ENCODE measurements at regions of chr3 and their contacts with region 1.

Region 1: GRCh38 chr3:25664810-25665314 is at the start of gene TOP2B:
- DNase-seq: peak; percentile 94 to 97 (median 95)
- H3K4me3 ChIP-seq: peak within 1 kb of the TSS; percentile 51 to 79
- H3K4me3 Mint-ChIP-seq: peak within 1 kb of the TSS; percentile 98 to 100 (median 99)
- H3K27ac ChIP-seq: peak within 1 kb of the TSS; percentile 86
- H3K27ac Mint-ChIP-seq: peak within 1 kb of the TSS; percentile 99 to 100 (median 100)
- H3K4me1 ChIP-seq: peaks cover 45% of the 10 kb centered on the region
- H3K4me1 Mint-ChIP-seq: peaks cover 27 to 58% (median 43%) of the 10 kb centered on the region in 4 donors
- H3K27me3 ChIP-seq: no peaks in the 10 kb centered on the region
- H3K27me3 Mint-ChIP-seq: no peaks in the 10 kb centered on the region
- total RNA-seq, gene TOP2B: 161 to 175 TPM

Region 2: GRCh38 chr3:23916886-23917678 is 1747.8 kb before region 1 on chr3 and contains the starts of genes NKIRAS1 and RPL15:
- CTCF ChIA-PET with region 1: no interaction called
- POLR2A ChIA-PET with region 1: no interaction called
- intact Hi-C with region 1: loop called (anchors 10 kb)
- DNase-seq: peak; percentile 97 to 98 (median 97)
- H3K4me3 ChIP-seq: peak within 1 kb of the TSS; percentile 89 to 90
- H3K4me3 Mint-ChIP-seq: peak within 1 kb of the TSS; percentile 98 to 99 (median 99)
- H3K27ac ChIP-seq: peak within 1 kb of the TSS; percentile 94
- H3K27ac Mint-ChIP-seq: peak within 1 kb of the TSS; percentile 92 to 100 (median 98)
- H3K4me1 ChIP-seq: peaks cover 37% of the 10 kb centered on the region
- H3K4me1 Mint-ChIP-seq: peaks cover 28 to 66% (median 40%) of the 10 kb centered on the region in 4 donors
- H3K27me3 ChIP-seq: no peaks in the 10 kb centered on the region
- H3K27me3 Mint-ChIP-seq: peaks cover 0 to 4% of the 10 kb centered on the region in 2 donors
- total RNA-seq, gene NKIRAS1: 5.2 to 5.3 TPM
- total RNA-seq, gene RPL15: 1,856 to 2,010 TPM

Region 3: DNA sequence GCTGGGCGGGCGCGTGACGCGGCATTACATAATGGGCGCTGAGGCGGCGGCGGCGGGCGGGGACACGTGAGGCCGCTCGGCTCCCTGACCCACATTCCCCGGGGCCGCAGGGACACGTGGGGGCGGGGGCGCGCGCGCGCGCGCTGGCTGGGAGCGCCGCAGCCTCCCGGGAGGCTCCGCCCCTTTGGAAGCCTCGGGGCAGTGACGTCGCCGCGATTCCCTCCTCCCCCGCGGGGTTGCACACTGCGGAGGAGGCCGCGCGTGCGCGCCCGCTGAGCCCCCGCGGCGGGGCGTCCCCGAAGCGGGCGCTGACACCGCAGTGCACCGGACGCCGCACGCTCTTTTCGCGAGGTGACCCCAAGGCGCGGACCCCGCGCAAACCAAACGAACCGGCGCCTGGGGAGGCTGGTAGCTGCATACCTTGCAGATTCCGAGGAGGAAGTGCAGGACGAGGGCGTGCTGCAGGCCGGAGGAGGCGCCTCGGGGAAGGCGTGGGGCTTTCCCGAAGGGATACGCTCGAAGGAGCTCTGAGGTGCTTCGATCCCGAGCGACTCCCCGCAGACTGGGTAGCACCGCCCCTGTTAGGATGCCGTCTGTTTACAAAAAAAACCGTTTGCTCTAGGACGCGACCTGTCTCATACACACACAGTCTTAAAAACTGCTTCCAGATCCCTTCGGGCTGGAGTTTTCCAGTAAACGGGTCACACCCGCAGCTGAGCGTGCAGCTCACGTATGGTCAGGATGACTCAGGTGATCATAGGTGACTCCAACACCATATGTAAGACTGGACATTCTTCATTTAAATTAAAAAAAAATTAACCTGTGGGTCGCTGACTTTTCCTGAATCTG is 1718.7 kb before region 1 on chr3:
- CTCF ChIA-PET with region 1: no interaction called
- POLR2A ChIA-PET with region 1: no interaction called
- intact Hi-C with region 1: loop called (anchors 1 kb)
- DNase-seq: peak; percentile 97 to 98 (median 98)
- H3K4me3 ChIP-seq: peak overlapping the region; percentile 83 to 86
- H3K4me3 Mint-ChIP-seq: peak overlapping the region; percentile 85 to 95 (median 88)
- H3K27ac ChIP-seq: peak overlapping the region; percentile 94
- H3K27ac Mint-ChIP-seq: peak overlapping the region; percentile 93 to 96 (median 95)
- H3K4me1 ChIP-seq: peaks cover 53% of the 10 kb centered on the region
- H3K4me1 Mint-ChIP-seq: peaks cover 38 to 61% (median 46%) of the 10 kb centered on the region in 4 donors
- H3K27me3 ChIP-seq: no peaks in the 10 kb centered on the region
- H3K27me3 Mint-ChIP-seq: no peaks in the 10 kb centered on the region

Region 4: DNA sequence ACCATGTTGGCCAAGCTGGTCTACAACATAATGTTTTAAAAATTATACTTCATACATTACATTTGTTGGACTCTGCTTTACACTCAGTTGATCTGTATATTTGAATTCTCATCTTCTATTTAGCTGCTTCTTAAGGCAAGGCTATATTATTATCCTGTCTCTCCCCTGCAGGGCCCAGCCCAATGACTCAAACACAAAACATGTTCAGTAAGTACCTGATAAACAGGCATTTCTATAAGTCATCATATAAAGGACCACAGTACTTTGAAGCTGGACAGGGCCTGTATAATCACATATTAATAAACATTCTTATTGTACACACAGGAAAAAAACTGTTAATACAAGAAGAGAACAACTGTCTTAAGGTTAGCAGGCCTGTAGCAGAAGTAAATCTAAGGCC is 82.2 kb after region 1 on chr3:
- CTCF ChIA-PET with region 1: no interaction called
- POLR2A ChIA-PET with region 1: no interaction called
- intact Hi-C with region 1: loop called (anchors 5 kb)
- DNase-seq: no peak
- H3K4me3 ChIP-seq: no peak overlapping the region
- H3K4me3 Mint-ChIP-seq: no peak overlapping the region
- H3K27ac ChIP-seq: no peak overlapping the region
- H3K27ac Mint-ChIP-seq: peak overlapping the region in 1 of 7 donors; percentile 14
- H3K4me1 ChIP-seq: no peaks in the 10 kb centered on the region
- H3K4me1 Mint-ChIP-seq: peaks cover 7 to 13% (median 12%) of the 10 kb centered on the region in 4 donors
- H3K27me3 ChIP-seq: no peaks in the 10 kb centered on the region
- H3K27me3 Mint-ChIP-seq: no peaks in the 10 kb centered on the region

Region 5: GRCh38 chr3:25782938-25783660 is 118.2 kb after region 1 on chr3 and contains the start of gene NGLY1:
- CTCF ChIA-PET with region 1: interaction called, 7 read pairs
- POLR2A ChIA-PET with region 1: interaction called, 10 read pairs
- intact Hi-C with region 1: loop called (anchors 1 kb)
- DNase-seq: peak; percentile 84 to 87 (median 86)
- H3K4me3 ChIP-seq: peak within 1 kb of the TSS; percentile 32 to 69
- H3K4me3 Mint-ChIP-seq: peak within 1 kb of the TSS; percentile 88 to 97 (median 92)
- H3K27ac ChIP-seq: peak within 1 kb of the TSS; percentile 83
- H3K27ac Mint-ChIP-seq: peak within 1 kb of the TSS; percentile 89 to 95 (median 94)
- H3K4me1 ChIP-seq: peaks cover 41% of the 10 kb centered on the region
- H3K4me1 Mint-ChIP-seq: peaks cover 22 to 53% (median 36%) of the 10 kb centered on the region in 4 donors
- H3K27me3 ChIP-seq: no peaks in the 10 kb centered on the region
- H3K27me3 Mint-ChIP-seq: no peaks in the 10 kb centered on the region
- total RNA-seq, gene NGLY1: 71.3 to 74.3 TPM

Region 6: DNA sequence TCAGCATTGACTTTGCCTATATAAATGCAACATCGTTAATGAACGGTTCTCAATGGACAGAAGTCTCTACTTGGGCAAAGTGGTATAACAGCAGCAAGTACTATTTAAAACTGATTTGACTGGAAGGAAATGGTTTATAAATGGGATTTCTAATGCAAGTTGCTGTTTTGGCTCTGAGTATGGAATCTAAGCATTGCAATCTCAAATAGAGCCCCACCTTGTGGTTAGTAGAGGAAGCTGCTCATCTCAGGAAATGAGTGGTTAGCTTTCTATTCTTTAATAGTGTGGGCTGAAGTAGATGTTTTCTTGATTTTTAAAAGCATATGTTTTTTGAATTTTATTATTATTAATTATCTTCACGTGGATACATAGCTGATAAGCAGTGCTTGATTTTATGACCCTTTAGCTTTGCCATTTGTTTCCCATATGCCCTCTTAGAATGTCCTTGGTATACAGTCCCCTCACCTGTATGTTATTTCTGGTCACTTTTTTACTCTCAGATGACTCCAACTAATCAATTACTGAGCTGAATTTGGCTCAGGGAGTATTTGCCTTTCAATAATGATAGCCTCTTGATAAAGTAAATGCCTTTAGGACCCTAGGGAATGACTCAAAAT is 192.1 kb after region 1 on chr3:
- CTCF ChIA-PET with region 1: interaction called, 12 read pairs
- POLR2A ChIA-PET with region 1: interaction called, 3 read pairs
- intact Hi-C with region 1: loop called (anchors 5 kb)
- DNase-seq: peak in 4 of 5 donors; percentile 39 to 50 (median 46)
- H3K4me3 ChIP-seq: no peak overlapping the region
- H3K4me3 Mint-ChIP-seq: no peak overlapping the region
- H3K27ac ChIP-seq: no peak overlapping the region
- H3K27ac Mint-ChIP-seq: no peak overlapping the region
- H3K4me1 ChIP-seq: no peaks in the 10 kb centered on the region
- H3K4me1 Mint-ChIP-seq: peaks cover 0 to 4% (median under 1%) of the 10 kb centered on the region in 4 donors
- H3K27me3 ChIP-seq: no peaks in the 10 kb centered on the region
- H3K27me3 Mint-ChIP-seq: no peaks in the 10 kb centered on the region

Region 7: DNA sequence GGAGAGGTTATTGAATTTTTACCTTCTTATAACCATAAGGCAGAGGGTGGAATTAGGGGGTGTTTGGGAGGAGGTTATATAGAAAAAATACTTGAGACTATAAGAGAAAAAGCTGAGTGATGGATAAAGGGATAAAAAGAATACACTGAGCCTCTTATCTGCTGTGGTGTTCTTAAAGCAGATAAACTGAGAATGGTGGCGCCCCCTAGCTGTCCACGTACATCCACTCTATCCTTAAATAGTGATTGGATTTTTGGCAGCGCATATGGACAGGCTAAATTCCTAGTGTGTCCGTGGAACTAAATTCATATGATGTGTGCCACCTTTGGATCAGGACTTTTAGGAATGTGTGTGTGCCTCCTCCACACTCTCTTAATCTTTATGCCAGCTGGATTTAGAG is 246.1 kb after region 1 on chr3:
- CTCF ChIA-PET with region 1: interaction called, 3 read pairs
- POLR2A ChIA-PET with region 1: no interaction called
- intact Hi-C with region 1: loop called (anchors 5 kb)
- DNase-seq: peak in 4 of 5 donors; percentile 11 to 27 (median 22)
- H3K4me3 ChIP-seq: no peak overlapping the region
- H3K4me3 Mint-ChIP-seq: peak overlapping the region in 4 of 8 donors; percentile 13 to 68 (median 43)
- H3K27ac ChIP-seq: no peak overlapping the region
- H3K27ac Mint-ChIP-seq: peak overlapping the region; percentile 56 to 98 (median 96)
- H3K4me1 ChIP-seq: peaks cover 14% of the 10 kb centered on the region
- H3K4me1 Mint-ChIP-seq: peaks cover 11 to 35% (median 21%) of the 10 kb centered on the region in 4 donors
- H3K27me3 ChIP-seq: no peaks in the 10 kb centered on the region
- H3K27me3 Mint-ChIP-seq: peaks cover 0 to 2% of the 10 kb centered on the region in 2 donors

Region 8: DNA sequence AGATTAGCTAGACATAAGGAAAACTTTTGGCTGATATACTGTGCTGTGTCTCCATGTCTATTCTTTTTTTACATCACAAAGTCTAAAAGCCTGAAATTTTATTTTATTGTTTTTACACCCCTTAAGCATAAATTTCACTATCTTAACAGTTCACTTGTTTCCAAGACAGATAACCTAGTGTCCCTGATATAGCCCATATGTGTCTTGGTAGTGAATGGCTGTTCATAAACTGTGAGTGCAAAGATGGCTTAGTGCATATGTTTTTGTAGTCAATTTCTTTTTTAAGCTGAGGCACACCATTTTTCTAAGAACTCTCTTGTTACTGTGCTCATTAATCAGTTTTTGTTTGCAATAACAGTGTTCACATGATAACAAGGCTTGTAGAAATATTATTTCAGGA is 506.1 kb after region 1 on chr3:
- CTCF ChIA-PET with region 1: no interaction called
- POLR2A ChIA-PET with region 1: no interaction called
- intact Hi-C with region 1: no loop called
- DNase-seq: no peak
- H3K4me3 ChIP-seq: no peak overlapping the region
- H3K4me3 Mint-ChIP-seq: no peak overlapping the region
- H3K27ac ChIP-seq: no peak overlapping the region
- H3K27ac Mint-ChIP-seq: no peak overlapping the region
- H3K4me1 ChIP-seq: no peaks in the 10 kb centered on the region
- H3K4me1 Mint-ChIP-seq: no peaks in the 10 kb centered on the region
- H3K27me3 ChIP-seq: no peaks in the 10 kb centered on the region
- H3K27me3 Mint-ChIP-seq: no peaks in the 10 kb centered on the region